Psoas muscle (tissue), 8 donors: ENCODE measurements at regions of chr6 and their contacts with region 1.

Region 1: GRCh38 chr6:17156112-17156921 is 54.5 kb downstream of the STMND1 start:
- DNase-seq: peak in 1 of 2 donors; percentile 32
- ATAC-seq: peak; percentile 69 to 92 (median 76)
- H3K4me3 ChIP-seq: no peak overlapping the region
- H3K27ac ChIP-seq: no peak overlapping the region
- H3K4me1 ChIP-seq: no peaks in the 10 kb centered on the region
- H3K27me3 ChIP-seq: no peaks in the 10 kb centered on the region
- CTCF ChIP-seq: peak; percentile 89

Region 2: GRCh38 chr6:17268114-17268513 is 111.8 kb after region 1 on chr6:
- intact Hi-C with region 1: no loop called
- DNase-seq: no peak
- ATAC-seq: peak; percentile 29 to 70 (median 54)
- H3K4me3 ChIP-seq: no peak overlapping the region
- H3K27ac ChIP-seq: peak overlapping the region; percentile 83
- H3K4me1 ChIP-seq: peaks cover 31% of the 10 kb centered on the region
- H3K27me3 ChIP-seq: no peaks in the 10 kb centered on the region
- CTCF ChIP-seq: no peak

Region 3: DNA sequence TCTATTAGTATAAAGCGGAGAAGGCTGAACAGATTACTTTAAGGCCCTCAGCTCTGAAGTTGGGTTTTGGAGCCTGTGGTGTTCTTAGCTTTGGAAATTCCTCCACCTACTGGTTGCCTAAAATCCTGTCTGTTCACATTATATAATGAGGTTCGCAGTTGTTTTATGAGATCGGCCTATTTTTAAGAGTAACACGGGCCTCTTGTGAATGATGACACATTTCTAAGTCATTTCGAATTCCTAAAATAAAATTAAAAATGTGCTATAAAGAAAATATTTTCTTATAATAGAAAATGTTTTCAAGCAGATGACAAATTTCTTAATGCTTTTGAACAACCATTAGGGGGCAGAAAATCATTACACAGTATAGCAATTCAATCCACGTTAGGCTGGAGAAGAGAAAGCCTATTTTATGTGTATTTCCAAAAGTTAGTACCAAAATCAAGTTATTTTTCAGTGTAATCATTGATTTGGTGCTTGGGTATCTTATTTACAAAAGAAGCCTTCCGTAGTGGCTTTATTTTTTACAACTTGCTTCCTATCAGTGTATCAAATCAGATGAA is 428.0 kb after region 1 on chr6:
- intact Hi-C with region 1: loop called (anchors 2 to 5 kb)
- DNase-seq: no peak
- ATAC-seq: peak; percentile 74 to 85 (median 80)
- H3K4me3 ChIP-seq: peak overlapping the region; percentile 39
- H3K27ac ChIP-seq: peak overlapping the region; percentile 76
- H3K4me1 ChIP-seq: peaks cover 10% of the 10 kb centered on the region
- H3K27me3 ChIP-seq: no peaks in the 10 kb centered on the region
- CTCF ChIP-seq: peak; percentile 81

Region 4: DNA sequence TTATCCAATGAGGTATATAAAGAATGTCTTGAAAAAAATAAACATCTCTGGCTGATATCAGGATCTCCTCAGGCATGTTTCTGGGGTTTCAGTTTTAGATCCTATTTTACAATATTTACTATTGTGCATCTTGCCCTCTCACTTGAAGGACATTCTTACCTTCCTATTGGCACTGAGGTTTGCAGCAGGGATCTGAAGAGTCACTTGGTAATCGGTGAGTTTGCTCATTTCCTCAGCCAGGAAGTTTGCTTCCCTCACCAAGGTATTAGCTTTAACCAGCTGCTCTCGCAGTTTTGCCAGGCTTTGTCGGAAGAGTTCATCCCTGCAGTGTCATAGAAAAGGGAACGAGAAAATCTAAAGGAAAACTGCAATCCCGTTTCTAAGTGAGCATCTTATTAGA is 652.3 kb after region 1 on chr6:
- intact Hi-C with region 1: loop called (anchors 1 to 5 kb)
- DNase-seq: no peak
- ATAC-seq: no peak
- H3K4me3 ChIP-seq: no peak overlapping the region
- H3K27ac ChIP-seq: no peak overlapping the region
- H3K4me1 ChIP-seq: no peaks in the 10 kb centered on the region
- H3K27me3 ChIP-seq: no peaks in the 10 kb centered on the region
- CTCF ChIP-seq: no peak

Region 5: GRCh38 chr6:18122124-18123093 is 966.1 kb after region 1 on chr6 and contains the start of gene NHLRC1:
- intact Hi-C with region 1: loop called in 1 of 2 experiments (anchors 10 kb)
- DNase-seq: peak; percentile 92 to 95
- ATAC-seq: peak; percentile 99 to 100 (median 99)
- H3K4me3 ChIP-seq: peak within 1 kb of the TSS; percentile 73
- H3K27ac ChIP-seq: peak within 1 kb of the TSS; percentile 77
- H3K4me1 ChIP-seq: peaks cover 12% of the 10 kb centered on the region
- H3K27me3 ChIP-seq: no peaks in the 10 kb centered on the region
- CTCF ChIP-seq: peak; percentile 98
- total RNA-seq, gene NHLRC1: 0.84 to 3.0 (median 1.6) TPM